ENCODE measurements at regions of chr15 and their contacts with region 1.

Region 1: DNA sequence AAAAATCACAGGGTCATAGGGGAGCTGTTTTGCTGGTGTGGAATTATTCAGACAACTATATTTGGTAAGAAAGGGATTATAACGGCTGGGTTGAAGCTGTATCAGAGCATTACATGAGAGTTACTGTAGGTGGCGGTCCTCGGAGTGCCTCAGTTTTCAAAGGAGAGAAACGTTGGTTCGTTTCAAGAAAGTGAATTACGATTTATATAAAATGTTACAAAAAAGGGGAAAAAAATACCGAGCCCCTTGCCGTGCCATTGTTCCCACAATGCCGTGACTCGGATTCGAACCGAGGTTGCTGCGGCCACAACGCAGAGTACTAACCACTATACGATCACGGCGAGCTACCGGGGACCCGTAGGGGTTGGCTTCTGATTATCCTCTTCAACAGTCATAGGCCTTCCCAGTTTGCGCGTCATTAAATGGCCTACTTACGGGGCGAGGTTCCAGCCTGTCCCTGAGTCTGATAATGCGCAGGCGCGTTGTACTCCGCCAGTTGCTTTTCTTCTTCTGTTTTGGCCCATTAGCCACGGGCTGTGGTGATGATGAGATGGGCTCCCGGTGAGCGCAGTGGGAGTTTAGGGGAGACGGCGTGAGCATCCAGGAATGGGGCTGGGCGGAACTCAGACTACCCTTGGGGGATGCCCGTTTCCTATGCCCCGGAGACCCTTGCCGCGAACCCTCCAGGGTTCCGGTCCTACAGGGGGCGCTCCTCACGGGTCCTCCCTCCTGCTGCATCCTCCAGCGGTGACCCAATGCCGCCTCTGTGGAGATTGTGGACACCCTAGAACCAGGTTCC is 10.8 kb upstream of the SHF start:
- DNase-seq: peak; percentile 74
- H3K4me3 ChIP-seq: peak overlapping the region; percentile 70 to 87
- H3K27ac ChIP-seq: peak overlapping the region; percentile 93 to 94
- H3K4me1 ChIP-seq: peaks cover 0 to 4% of the 10 kb centered on the region in 2 experiments; a peak in 1 of 4 replicates
- H3K27me3 ChIP-seq: no peaks in the 10 kb centered on the region
- CTCF ChIP-seq: peak; percentile 94
- EP300 ChIP-seq: peak in 1 of 2 experiments; percentile 52; a peak in 1 of 4 replicates
- RAD21 ChIP-seq: peak; percentile 28

Region 2: GRCh38 chr15:45048794-45049631 is 149.5 kb before region 1 on chr15:
- CTCF ChIA-PET with region 1: no interaction called
- POLR2A ChIA-PET with region 1: no interaction called
- DNase-seq: no peak
- H3K4me3 ChIP-seq: no peak overlapping the region
- H3K27ac ChIP-seq: no peak overlapping the region
- H3K4me1 ChIP-seq: no peaks in the 10 kb centered on the region
- H3K27me3 ChIP-seq: no peaks in the 10 kb centered on the region
- CTCF ChIP-seq: no peak
- EP300 ChIP-seq: no peak
- RAD21 ChIP-seq: no peak

Region 3: DNA sequence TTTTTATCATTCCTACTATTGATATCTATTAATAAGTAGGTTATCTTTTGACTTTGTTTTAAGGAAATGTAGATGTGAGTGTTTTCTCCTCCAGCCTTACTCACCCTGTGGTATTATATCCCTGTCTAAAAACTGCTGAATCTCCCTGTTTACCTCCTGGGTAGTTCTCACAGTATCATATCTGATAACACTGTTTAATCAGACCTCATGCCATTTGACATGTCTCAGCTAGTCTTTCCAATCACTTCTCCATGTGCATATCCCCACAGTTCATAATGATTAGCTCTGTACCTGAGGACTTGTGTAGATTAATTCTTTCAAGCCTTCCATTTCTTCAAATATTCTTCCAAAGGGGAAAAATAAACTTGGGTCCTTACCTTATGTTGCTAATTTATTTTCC is 115.3 kb before region 1 on chr15:
- CTCF ChIA-PET with region 1: no interaction called
- POLR2A ChIA-PET with region 1: no interaction called
- DNase-seq: no peak
- H3K4me3 ChIP-seq: no peak overlapping the region
- H3K27ac ChIP-seq: no peak overlapping the region
- H3K4me1 ChIP-seq: peaks cover 0 to 8% of the 10 kb centered on the region in 2 experiments; a peak in 1 of 4 replicates
- H3K27me3 ChIP-seq: no peaks in the 10 kb centered on the region
- CTCF ChIP-seq: no peak
- EP300 ChIP-seq: no peak
- RAD21 ChIP-seq: no peak

Region 4: DNA sequence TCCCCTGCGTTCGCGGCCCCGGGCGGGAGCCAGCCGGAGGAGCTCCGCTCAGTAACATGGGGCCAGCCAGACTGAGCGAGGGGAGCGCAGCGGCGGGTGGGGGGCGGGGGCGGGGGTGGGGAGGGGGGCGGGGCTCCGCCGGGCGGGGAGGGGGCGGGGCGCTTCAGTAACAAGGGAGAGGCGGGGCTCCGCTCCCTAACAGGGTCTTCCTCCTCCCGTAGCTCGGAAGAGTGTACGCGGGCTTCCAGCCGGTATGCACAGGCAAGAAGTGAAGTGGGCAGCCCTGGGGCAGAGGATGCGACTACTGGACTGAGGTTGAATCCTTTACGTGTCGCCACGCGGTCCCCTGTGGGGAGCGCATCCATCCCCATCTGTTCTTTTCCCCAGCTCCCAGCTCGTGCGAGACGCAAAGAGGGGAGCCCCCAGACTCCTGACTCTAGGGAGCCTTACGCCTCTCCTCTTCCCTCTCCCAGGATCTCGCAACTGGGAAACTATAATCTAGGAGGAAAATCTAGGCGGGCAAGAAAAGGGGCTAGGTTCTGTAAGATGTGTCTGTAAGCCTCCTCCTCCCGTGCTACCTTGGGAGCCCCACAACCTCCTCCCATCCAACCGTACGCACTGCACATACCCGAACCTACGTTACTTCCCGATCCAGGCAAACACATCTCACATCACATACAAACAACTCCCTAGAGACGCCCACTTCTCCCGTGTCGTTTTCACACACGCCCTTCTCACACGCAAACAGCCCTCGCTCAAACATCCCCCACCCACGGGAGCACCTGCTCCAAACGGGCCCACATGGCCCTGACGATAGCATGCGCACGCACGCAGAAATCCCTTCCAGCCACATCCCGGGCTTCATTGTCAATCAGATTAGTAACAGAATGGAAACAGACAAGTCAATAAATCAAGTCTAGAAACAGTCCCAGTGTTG is 10.4 kb before region 1 on chr15 and contains the start of gene SHF:
- CTCF ChIA-PET with region 1: interaction called, 8 read pairs
- POLR2A ChIA-PET with region 1: interaction called, 66 read pairs
- DNase-seq: peak; percentile 93
- H3K4me3 ChIP-seq: peak within 1 kb of the TSS; percentile 74 to 78
- H3K27ac ChIP-seq: peak within 1 kb of the TSS in 1 of 2 experiments; percentile 87; a peak in 2 of 4 replicates
- H3K4me1 ChIP-seq: peaks cover 12 to 42% of the 10 kb centered on the region in 2 experiments; a peak in 3 of 4 replicates
- H3K27me3 ChIP-seq: no peaks in the 10 kb centered on the region; the same call in 1 of the 2 replicates
- CTCF ChIP-seq: no peak
- EP300 ChIP-seq: no peak
- RAD21 ChIP-seq: no peak
- polyA plus RNA-seq, gene SHF: 4.4 and 5.5 TPM in 2 replicates

Region 5: DNA sequence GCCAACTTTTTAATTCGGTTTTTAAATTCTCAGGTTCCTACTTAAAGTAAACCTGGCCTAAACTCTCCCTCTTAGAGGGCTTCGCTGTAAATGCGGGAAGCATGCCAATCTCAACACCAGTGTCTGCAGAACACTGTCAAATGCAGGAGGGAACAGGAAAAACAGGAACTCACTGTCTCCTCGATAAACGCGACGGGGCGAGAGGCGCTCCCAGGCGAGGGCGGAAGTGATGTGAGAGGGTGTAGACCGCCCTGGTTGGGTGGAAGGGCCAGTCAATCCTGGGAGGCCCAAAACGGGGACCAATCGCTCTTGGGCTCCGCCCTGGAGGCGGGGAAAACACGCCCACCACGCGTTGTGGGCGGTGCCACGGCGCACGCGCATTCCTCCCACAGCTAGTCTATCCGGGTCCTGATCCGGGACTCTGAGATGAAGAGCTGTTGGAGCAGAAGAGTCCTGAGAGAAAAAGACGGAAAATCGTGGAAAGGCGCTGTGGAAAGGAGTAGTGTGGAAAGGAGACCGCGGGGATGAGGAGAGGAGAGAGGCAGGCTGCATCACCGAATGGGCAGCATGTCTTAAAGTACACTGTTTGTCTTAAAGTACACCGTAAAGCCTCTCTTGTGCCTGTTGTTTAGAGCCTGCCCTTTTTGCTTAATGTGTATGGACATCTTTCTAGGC is 80.6 kb after region 1 on chr15:
- CTCF ChIA-PET with region 1: interaction called, 5 read pairs
- POLR2A ChIA-PET with region 1: interaction called, 10 read pairs
- DNase-seq: peak; percentile 97
- H3K4me3 ChIP-seq: peak overlapping the region; percentile 53 to 88
- H3K27ac ChIP-seq: peak overlapping the region; percentile 58 to 88; a peak in 3 of 4 replicates
- H3K4me1 ChIP-seq: peaks cover 0 to 12% of the 10 kb centered on the region in 2 experiments; a peak in 2 of 4 replicates
- H3K27me3 ChIP-seq: no peaks in the 10 kb centered on the region
- CTCF ChIP-seq: no peak
- EP300 ChIP-seq: no peak
- RAD21 ChIP-seq: no peak

Region 6: GRCh38 chr15:45291822-45292582 is 93.5 kb after region 1 on chr15:
- CTCF ChIA-PET with region 1: no interaction called
- POLR2A ChIA-PET with region 1: no interaction called
- DNase-seq: no peak
- H3K4me3 ChIP-seq: no peak overlapping the region
- H3K27ac ChIP-seq: no peak overlapping the region
- H3K4me1 ChIP-seq: no peaks in the 10 kb centered on the region
- H3K27me3 ChIP-seq: no peaks in the 10 kb centered on the region; the same call in 1 of the 2 replicates
- CTCF ChIP-seq: no peak
- EP300 ChIP-seq: no peak
- RAD21 ChIP-seq: no peak